B cell (primary cell): ENCODE measurements at regions of chrX and their contacts with region 1.

Region 1: GRCh38 chrX:14673764-14674163 is 144.4 kb downstream of the GLRA2 start:
- DNase-seq: peak; percentile 48
- ATAC-seq: peak; percentile 89
- H3K4me3 ChIP-seq: no peak overlapping the region
- H3K4me3 Mint-ChIP-seq: peak overlapping the region; percentile 30
- H3K27ac ChIP-seq: no peak overlapping the region
- H3K27ac Mint-ChIP-seq: peak overlapping the region; percentile 64
- H3K4me1 ChIP-seq: peaks cover 36 to 38% of the 10 kb centered on the region in 2 donors
- H3K4me1 Mint-ChIP-seq: peaks cover 54% of the 10 kb centered on the region
- H3K27me3 ChIP-seq: no peaks in the 10 kb centered on the region
- H3K27me3 Mint-ChIP-seq: no peaks in the 10 kb centered on the region
- CTCF ChIP-seq: no peak

Region 2: DNA sequence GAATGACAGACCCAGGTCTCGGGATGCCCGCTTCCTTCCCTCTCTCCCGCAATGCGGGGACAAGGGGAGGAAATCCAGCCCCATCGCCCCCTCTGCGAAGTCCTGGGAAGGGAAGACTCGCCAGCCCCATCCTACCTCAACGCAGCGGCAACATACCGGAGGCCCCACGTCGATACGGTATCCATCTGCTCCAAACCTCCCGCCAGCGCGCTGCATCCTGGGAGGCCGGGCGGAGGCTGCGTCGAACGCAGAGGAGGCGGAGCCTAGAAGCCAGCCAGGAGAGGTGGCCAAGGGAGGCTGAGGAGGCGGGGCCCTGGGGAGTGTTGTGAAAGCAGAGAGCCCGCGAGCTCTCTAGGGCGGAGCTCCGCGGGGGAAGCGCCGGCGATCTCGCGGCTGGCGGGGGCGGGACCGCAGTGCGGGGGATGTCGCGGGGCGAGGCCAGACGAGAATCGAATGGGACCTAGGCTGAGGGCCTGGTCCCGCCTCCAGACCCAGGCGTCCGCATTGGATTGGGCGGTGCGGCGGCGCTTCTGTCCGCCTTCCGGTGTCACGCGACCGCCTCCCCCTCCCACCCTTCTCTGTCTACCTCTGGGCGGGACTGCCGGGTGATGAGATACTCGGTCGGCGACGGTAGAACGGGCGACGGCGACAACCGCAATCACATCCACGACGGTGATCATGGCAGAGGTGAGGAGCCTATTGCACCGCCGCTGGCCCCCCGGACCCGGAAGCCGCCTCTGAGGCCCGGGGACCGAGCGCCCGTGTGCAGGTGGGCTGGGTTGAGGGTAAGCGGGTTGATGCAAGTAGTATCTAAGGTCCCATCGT is 199.3 kb after region 1 on chrX and contains the starts of genes FANCB and MOSPD2:
- CTCF ChIA-PET with region 1: no interaction called
- POLR2A ChIA-PET with region 1: no interaction called
- intact Hi-C with region 1: loop called (anchors 5 kb)
- DNase-seq: peak; percentile 94
- ATAC-seq: peak; percentile 91
- H3K4me3 ChIP-seq: peak within 1 kb of the TSS; percentile 69 to 89 (median 75)
- H3K4me3 Mint-ChIP-seq: peak within 1 kb of the TSS; percentile 92
- H3K27ac ChIP-seq: peak within 1 kb of the TSS; percentile 80 to 85
- H3K27ac Mint-ChIP-seq: peak within 1 kb of the TSS; percentile 93
- H3K4me1 ChIP-seq: peaks cover 7 to 11% of the 10 kb centered on the region in 2 donors
- H3K4me1 Mint-ChIP-seq: peaks cover 13% of the 10 kb centered on the region
- H3K27me3 ChIP-seq: no peaks in the 10 kb centered on the region
- H3K27me3 Mint-ChIP-seq: no peaks in the 10 kb centered on the region
- CTCF ChIP-seq: no peak
- total RNA-seq, gene FANCB: 3.9 and 7.6 TPM in 2 replicates
- total RNA-seq, gene MOSPD2: 23.1 and 27.0 TPM in 2 replicates